ENCODE measurements at regions of chr1 and their contacts with region 1.

Region 1: GRCh38 chr1:150186789-150187559 is 37.3 kb downstream of the PLEKHO1 start:
- DNase-seq: peak; percentile 44
- ATAC-seq: peak; percentile 79
- H3K4me3 Mint-ChIP-seq: peak overlapping the region; percentile 1
- H3K27ac Mint-ChIP-seq: peak overlapping the region; percentile 68
- H3K4me1 Mint-ChIP-seq: peaks cover 15% of the 10 kb centered on the region
- H3K27me3 Mint-ChIP-seq: no peaks in the 10 kb centered on the region

Region 2: DNA sequence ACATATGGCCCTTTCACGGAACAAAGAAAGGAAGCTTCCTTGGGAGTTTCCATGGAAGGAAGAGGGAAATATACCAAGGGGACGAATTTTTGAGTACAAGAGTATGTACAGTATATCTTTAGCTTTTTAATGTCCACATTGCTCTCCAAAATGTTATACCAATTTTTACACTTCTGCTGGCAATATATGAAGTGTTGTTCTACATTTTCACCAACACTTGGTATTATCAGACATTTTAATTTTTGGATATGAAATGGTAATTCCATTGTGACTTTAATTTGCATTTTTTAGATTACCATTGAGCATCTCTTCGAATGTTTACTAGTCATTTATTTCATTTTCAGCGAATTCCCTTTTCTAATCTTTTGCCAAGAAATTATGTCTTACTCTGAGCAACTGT is 124.9 kb before region 1 on chr1:
- CTCF ChIA-PET with region 1: interaction called, 14 read pairs
- POLR2A ChIA-PET with region 1: no interaction called
- DNase-seq: no peak
- ATAC-seq: no peak
- H3K4me3 Mint-ChIP-seq: no peak overlapping the region
- H3K27ac Mint-ChIP-seq: no peak overlapping the region
- H3K4me1 Mint-ChIP-seq: peaks cover 12% of the 10 kb centered on the region
- H3K27me3 Mint-ChIP-seq: no peaks in the 10 kb centered on the region

Region 3: DNA sequence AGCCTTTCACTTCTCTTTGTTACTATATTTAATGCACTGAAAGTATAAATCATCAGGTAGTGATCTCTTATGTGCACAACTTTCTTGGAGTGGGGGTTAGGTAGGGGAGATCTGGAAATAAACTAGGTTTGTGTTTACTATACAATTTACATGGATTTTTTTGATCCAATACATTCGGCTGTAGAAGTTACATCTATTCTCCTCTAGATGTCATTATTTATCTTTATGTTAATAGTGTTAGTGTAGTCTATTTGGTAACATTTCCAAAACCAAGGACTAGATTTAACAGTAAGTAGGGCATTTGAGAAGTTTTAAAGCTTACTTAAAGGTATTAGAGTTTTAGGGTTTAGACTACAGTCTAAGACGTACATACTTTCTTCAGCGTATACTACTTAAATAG is 114.0 kb before region 1 on chr1:
- CTCF ChIA-PET with region 1: interaction called, 101 read pairs
- POLR2A ChIA-PET with region 1: interaction called, 5 read pairs
- DNase-seq: no peak
- ATAC-seq: peak; percentile 81
- H3K4me3 Mint-ChIP-seq: no peak overlapping the region
- H3K27ac Mint-ChIP-seq: peak overlapping the region; percentile 5
- H3K4me1 Mint-ChIP-seq: peaks cover 52% of the 10 kb centered on the region
- H3K27me3 Mint-ChIP-seq: no peaks in the 10 kb centered on the region

Region 4: DNA sequence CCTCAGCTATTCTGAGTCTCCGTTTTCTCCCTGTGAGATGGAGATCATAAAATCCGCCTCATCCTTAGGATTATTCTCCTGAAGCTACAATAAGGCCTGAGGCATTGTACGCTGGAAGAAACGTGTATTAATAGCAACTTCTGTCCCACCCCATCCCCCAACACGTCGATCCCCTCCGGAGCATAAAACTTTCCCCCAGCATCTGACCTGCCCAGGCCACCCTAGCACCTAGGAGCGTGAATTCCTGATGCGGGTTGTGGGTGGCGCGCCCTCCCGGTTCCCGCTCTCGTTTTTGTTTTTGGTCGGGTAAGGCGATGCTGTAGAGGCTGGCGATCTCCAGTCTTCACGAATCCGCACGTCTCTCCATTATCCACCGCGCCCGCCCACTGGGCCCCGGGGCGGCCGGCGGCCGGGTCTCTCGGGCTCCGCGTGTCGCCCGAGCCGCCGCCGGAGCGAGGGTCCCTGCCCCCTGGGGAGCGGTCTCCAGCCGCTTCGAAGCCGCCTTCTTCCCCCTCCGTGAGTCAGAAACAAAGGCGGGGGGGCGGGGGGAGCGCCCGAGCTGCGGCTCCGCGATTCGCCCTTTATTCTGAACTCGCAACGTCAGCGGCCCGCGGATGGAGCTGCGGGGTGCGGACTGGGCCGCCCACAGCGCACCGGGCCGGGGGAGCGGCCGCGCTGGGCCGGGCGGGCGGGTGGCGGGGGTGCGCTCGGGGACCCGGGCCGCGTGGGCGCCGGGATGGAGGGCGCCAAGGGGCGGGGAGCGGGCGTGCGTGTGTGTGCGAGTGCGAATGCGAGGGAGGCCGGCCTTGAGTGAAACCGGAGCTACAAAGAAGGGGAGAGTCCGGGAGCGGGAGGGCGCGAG is 37.5 kb before region 1 on chr1 and contains the start of gene PLEKHO1:
- CTCF ChIA-PET with region 1: interaction called, 10 read pairs
- POLR2A ChIA-PET with region 1: no interaction called
- DNase-seq: peak; percentile 86
- ATAC-seq: peak; percentile 73
- H3K4me3 Mint-ChIP-seq: peak within 1 kb of the TSS; percentile 93
- H3K27ac Mint-ChIP-seq: peak within 1 kb of the TSS; percentile 94
- H3K4me1 Mint-ChIP-seq: peaks cover 70% of the 10 kb centered on the region
- H3K27me3 Mint-ChIP-seq: no peaks in the 10 kb centered on the region
- total RNA-seq, gene PLEKHO1: 138 to 154 TPM

Region 5: DNA sequence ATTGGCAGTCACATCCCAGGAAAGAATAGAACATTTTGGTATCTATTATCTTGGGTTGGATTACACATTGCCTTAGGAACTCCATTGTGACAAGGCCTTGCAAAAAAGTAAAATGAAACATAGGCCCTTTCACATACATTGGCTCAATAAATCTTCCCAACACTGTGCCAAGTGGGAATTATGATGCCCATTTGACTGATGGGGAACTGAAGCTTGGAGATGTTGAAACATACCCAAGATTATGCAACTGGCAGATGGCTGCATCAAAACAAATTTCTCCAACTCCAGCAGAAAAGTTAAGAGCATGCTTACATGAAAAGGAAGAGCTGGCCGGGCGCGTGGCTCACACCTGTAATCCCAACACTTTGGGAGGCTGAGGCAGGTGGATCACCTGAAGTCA is 10.4 kb before region 1 on chr1:
- CTCF ChIA-PET with region 1: interaction called, 23 read pairs
- POLR2A ChIA-PET with region 1: no interaction called
- DNase-seq: no peak
- ATAC-seq: no peak
- H3K4me3 Mint-ChIP-seq: no peak overlapping the region
- H3K27ac Mint-ChIP-seq: no peak overlapping the region
- H3K4me1 Mint-ChIP-seq: peaks cover 2% of the 10 kb centered on the region
- H3K27me3 Mint-ChIP-seq: peaks cover 2% of the 10 kb centered on the region

Region 6: GRCh38 chr1:150449451-150449850 is 262.5 kb after region 1 on chr1:
- CTCF ChIA-PET with region 1: no interaction called
- POLR2A ChIA-PET with region 1: no interaction called
- DNase-seq: no peak
- ATAC-seq: no peak
- H3K4me3 Mint-ChIP-seq: no peak overlapping the region
- H3K27ac Mint-ChIP-seq: no peak overlapping the region
- H3K4me1 Mint-ChIP-seq: no peaks in the 10 kb centered on the region
- H3K27me3 Mint-ChIP-seq: no peaks in the 10 kb centered on the region

Measured in activated CD8-positive, alpha-beta T cell treated with anti-CD3 and anti-CD28 coated beads, Interleukin-2, amount 10 ng/mL, durations not matched to agents 7 days and 5 days (primary cell).